AG04450 (cell line): ENCODE measurements at regions of chr9 and their contacts with region 1.

Region 1: DNA sequence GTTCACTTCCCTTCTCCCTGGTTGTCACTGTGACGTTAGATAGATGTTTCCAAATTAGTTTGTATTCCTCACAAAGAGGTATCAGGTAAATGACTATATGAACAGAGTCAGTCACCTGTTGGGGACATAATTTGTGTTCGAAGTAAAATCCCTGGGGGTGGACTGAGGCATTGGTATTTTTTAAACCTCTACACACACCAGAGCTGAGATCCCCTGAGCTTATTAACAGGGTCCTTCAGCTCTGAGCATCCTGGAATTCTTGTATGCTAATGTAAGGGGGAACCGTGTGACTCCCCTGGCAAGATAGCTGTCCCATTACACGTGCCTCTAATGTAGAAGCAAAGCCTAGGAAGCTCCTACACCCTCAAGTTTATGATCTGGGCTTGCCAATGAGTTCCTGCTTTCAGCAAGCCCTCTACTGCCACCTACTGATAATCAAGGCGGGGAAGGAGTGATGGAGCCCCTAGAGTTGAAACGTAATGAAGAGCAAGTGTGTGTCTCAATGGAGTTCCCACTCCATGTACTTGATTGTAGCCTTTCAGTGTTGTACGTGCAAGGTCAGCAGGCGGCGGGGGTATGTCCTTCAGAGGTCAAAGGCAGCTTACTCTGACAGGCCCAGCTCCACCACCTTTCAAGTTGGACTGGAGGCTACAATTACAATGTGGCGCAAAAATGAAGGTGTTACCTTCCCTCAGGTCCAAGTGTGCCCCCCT is 14.4 kb downstream of the PRKACG start:
- DNase-seq: peak; percentile 24
- H3K4me3 ChIP-seq: no peak overlapping the region
- H3K27ac ChIP-seq: no peak overlapping the region
- H3K27me3 ChIP-seq: peaks cover 6% of the 10 kb centered on the region
- CTCF ChIP-seq: peak; percentile 90

Region 2: GRCh38 chr9:68437785-68438184 is 561.8 kb before region 1 on chr9:
- CTCF ChIA-PET with region 1: interaction called, 10 read pairs
- POLR2A ChIA-PET with region 1: no interaction called
- DNase-seq: no peak
- H3K4me3 ChIP-seq: no peak overlapping the region
- H3K27ac ChIP-seq: no peak overlapping the region
- H3K27me3 ChIP-seq: no peaks in the 10 kb centered on the region
- CTCF ChIP-seq: no peak